Heart left ventricle (tissue), 16 donors: ENCODE measurements at regions of chr1 and their contacts with region 1.

Region 1: DNA sequence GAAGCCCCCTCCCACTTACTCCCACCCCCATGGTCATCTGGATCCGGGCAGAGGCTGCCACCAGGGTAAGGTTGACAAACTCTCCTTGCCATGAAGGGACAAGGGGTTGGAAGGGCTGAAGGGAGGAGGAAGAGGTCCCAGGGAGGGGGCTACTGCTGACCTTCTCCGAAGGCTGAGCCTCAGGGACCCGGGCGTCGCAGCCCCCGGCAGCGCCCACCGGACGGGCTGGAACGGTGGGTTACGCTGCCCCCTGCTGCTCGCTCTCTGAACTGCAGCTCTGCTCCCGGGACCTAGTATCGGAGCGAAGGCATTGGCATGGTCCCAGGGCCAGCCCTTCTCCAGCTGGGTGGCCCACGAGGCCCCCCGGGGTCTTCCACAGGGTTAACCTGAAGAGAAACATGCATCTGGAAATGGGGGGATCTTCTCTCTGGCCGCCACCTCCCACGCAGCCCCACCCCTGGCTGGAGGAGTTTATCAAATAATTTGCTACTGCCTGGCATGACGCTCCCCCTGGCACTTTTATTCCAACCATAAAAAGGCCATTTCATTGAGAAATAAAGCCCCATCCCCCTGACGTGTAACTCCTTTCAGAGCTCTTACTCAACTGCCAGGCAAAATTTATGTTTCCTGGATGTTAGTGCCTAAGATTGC is 70.4 kb upstream of the TARDBP start:
- DNase-seq: peak in 2 of 5 donors; percentile 58 to 77
- ATAC-seq: peak in 2 of 4 donors; percentile 12 to 43
- H3K4me3 ChIP-seq: no peak overlapping the region
- H3K27ac ChIP-seq: no peak overlapping the region
- H3K4me1 ChIP-seq: peaks cover 0 to 22% (median 12%) of the 10 kb centered on the region in 12 donors
- H3K27me3 ChIP-seq: peaks cover 0 to 6% (median 0%) of the 10 kb centered on the region in 9 donors
- CTCF ChIP-seq: peak; percentile 80 to 94 (median 84)
- POLR2A ChIP-seq: no peak

Region 2: GRCh38 chr1:10494754-10495474 is 447.1 kb before region 1 on chr1:
- intact Hi-C with region 1: loop called in 3 of 10 experiments (anchors 10 kb)
- DNase-seq: peak; percentile 46 to 82 (median 63)
- ATAC-seq: peak; percentile 87 to 89 (median 88)
- H3K4me3 ChIP-seq: peak overlapping the region in 9 of 12 donors; percentile 11 to 50 (median 30)
- H3K27ac ChIP-seq: peak overlapping the region in 10 of 12 donors; percentile 33 to 81 (median 58)
- H3K4me1 ChIP-seq: peaks cover 0 to 28% (median 18%) of the 10 kb centered on the region in 12 donors
- H3K27me3 ChIP-seq: no peaks in the 10 kb centered on the region
- CTCF ChIP-seq: peak; percentile 76 to 91 (median 87)
- POLR2A ChIP-seq: no peak